ENCODE measurements at regions of chr14 and their contacts with region 1.

Region 1: GRCh38 chr14:96001866-96002497 is 37.2 kb upstream of the C14orf132 start:
- DNase-seq: peak; percentile 8
- ATAC-seq: peak; percentile 56
- H3K4me3 ChIP-seq: no peak overlapping the region
- H3K27ac ChIP-seq: no peak overlapping the region
- H3K4me1 ChIP-seq: no peaks in the 10 kb centered on the region
- H3K27me3 ChIP-seq: peaks cover 22% of the 10 kb centered on the region
- CTCF ChIP-seq: no peak
- POLR2A ChIP-seq: no peak
- RAD21 ChIP-seq: no peak

Region 2: GRCh38 chr14:96031691-96032090 is 29.7 kb after region 1 on chr14:
- CTCF ChIA-PET with region 1: no interaction called
- POLR2A ChIA-PET with region 1: no interaction called
- dilution Hi-C with region 1: no loop called
- in situ Hi-C with region 1: no loop called
- intact Hi-C with region 1: loop called (anchors 2 kb)
- DNase-seq: no peak
- ATAC-seq: no peak
- H3K4me3 ChIP-seq: no peak overlapping the region
- H3K27ac ChIP-seq: no peak overlapping the region
- H3K4me1 ChIP-seq: no peaks in the 10 kb centered on the region
- H3K27me3 ChIP-seq: peaks cover 30% of the 10 kb centered on the region
- CTCF ChIP-seq: no peak
- POLR2A ChIP-seq: no peak
- RAD21 ChIP-seq: no peak

Region 3: DNA sequence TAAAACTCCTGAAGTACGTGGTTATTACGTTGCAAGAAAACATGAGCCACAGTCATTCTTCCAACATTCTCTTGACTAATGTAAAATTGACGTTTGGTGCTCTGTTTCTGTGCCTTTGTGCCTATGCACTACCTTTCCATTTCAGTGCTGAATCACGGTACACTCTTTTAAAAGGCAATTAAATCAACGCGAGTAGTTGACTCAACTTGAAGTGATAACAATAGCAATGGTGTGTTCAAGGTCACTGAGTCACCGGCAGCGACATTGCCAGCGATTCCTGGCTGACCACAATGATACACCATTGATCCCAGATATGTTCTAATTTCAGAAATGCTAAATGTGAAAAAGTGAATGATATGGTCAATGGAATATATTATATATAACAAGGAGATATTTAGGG is 407.7 kb after region 1 on chr14:
- CTCF ChIA-PET with region 1: no interaction called
- POLR2A ChIA-PET with region 1: no interaction called
- dilution Hi-C with region 1: no loop called
- in situ Hi-C with region 1: loop called (anchors 10 kb)
- intact Hi-C with region 1: no loop called
- DNase-seq: no peak
- ATAC-seq: no peak
- H3K4me3 ChIP-seq: no peak overlapping the region
- H3K27ac ChIP-seq: no peak overlapping the region
- H3K4me1 ChIP-seq: no peaks in the 10 kb centered on the region
- H3K27me3 ChIP-seq: peaks cover 8% of the 10 kb centered on the region
- CTCF ChIP-seq: no peak
- POLR2A ChIP-seq: no peak
- RAD21 ChIP-seq: no peak

Measured in IMR-90 (cell line).